ENCODE measurements at regions of chr5 and their contacts with region 1.

Region 1: GRCh38 chr5:112146323-112147226 is 272.5 kb downstream of the EPB41L4A start:
- DNase-seq: peak; percentile 30
- H3K4me3 Mint-ChIP-seq: no peak overlapping the region
- H3K27ac Mint-ChIP-seq: no peak overlapping the region
- H3K4me1 Mint-ChIP-seq: no peaks in the 10 kb centered on the region
- H3K27me3 Mint-ChIP-seq: peaks cover 6% of the 10 kb centered on the region

Region 2: GRCh38 chr5:111158105-111158744 is 988.4 kb before region 1 on chr5:
- intact Hi-C with region 1: loop called (anchors 1 kb)
- DNase-seq: peak; percentile 62
- H3K4me3 Mint-ChIP-seq: no peak overlapping the region
- H3K27ac Mint-ChIP-seq: no peak overlapping the region
- H3K4me1 Mint-ChIP-seq: peaks cover 4% of the 10 kb centered on the region
- H3K27me3 Mint-ChIP-seq: no peaks in the 10 kb centered on the region

Region 3: GRCh38 chr5:111278845-111279504 is 867.6 kb before region 1 on chr5:
- intact Hi-C with region 1: loop called (anchors 2 kb)
- DNase-seq: peak; percentile 75
- H3K4me3 Mint-ChIP-seq: no peak overlapping the region
- H3K27ac Mint-ChIP-seq: no peak overlapping the region
- H3K4me1 Mint-ChIP-seq: peaks cover 27% of the 10 kb centered on the region
- H3K27me3 Mint-ChIP-seq: no peaks in the 10 kb centered on the region

Region 4: GRCh38 chr5:111530298-111530740 is 616.3 kb before region 1 on chr5:
- intact Hi-C with region 1: loop called (anchors 1 kb)
- DNase-seq: peak; percentile 82
- H3K4me3 Mint-ChIP-seq: peak overlapping the region; percentile 38
- H3K27ac Mint-ChIP-seq: peak overlapping the region; percentile 89
- H3K4me1 Mint-ChIP-seq: peaks cover 33% of the 10 kb centered on the region
- H3K27me3 Mint-ChIP-seq: no peaks in the 10 kb centered on the region

Region 5: DNA sequence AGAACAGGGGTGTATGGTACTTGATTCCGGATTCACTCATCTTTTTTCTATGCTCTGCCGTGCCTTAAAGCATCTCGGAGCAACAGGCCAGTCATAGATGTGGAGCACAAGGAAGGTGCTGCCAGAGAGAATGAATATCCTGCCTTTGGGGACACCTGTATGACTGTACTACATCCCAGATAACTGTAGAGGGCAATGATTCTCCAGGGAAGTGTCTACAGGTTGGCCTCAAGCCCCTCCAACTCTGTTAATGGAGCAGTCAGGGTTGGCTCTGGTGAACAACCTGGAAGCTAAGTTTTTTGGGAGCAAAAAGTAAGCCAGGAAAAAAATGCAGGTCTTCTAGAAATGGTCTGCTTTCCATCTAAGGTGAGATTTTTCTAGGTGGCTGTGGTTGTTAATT is 460.6 kb before region 1 on chr5:
- intact Hi-C with region 1: loop called (anchors 1 kb)
- DNase-seq: no peak
- H3K4me3 Mint-ChIP-seq: no peak overlapping the region
- H3K27ac Mint-ChIP-seq: no peak overlapping the region
- H3K4me1 Mint-ChIP-seq: no peaks in the 10 kb centered on the region
- H3K27me3 Mint-ChIP-seq: no peaks in the 10 kb centered on the region

Region 6: DNA sequence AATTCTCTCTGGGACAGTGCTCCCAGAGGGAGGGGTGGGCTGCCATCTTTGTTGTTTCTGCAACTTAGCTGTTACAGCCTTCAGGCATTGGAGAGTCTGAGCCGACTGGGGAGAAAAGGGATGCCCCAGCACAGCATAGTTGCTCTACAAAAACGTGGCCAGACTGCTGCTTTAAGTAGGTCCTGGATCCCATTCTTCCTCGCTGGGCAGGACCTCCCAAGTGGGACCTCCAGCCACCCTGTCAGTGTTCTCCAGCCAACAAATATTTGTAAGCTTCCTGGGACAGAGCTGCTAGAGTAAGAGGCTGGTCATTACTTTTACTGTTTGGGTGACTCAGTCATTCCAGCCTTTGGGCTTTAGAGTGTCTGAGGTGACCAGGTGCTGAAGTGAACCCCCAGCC is 96.8 kb before region 1 on chr5:
- intact Hi-C with region 1: no loop called
- DNase-seq: no peak
- H3K4me3 Mint-ChIP-seq: no peak overlapping the region
- H3K27ac Mint-ChIP-seq: no peak overlapping the region
- H3K4me1 Mint-ChIP-seq: no peaks in the 10 kb centered on the region
- H3K27me3 Mint-ChIP-seq: peaks cover 4% of the 10 kb centered on the region

Measured in activated T-helper 1 cell treated with anti-CD3 and anti-CD28 coated beads, Interleukin-12 subunit alpha, Interleukin-12 subunit beta, Interleukin-2, Interleukin-4 antibody, amounts not matched to agents 30 ng/mL and 10 ng/mL and 1 ng/mL, durations not matched to agents 14 hours and 24 hours and 36 hours (primary cell).